Mammary epithelial cell (primary cell): ENCODE measurements at regions of chr15 and their contacts with region 1.

Region 1: GRCh38 chr15:75801859-75802593 is 41.2 kb upstream of the UBE2Q2 start:
- DNase-seq: peak; percentile 54
- H3K4me3 ChIP-seq: peak overlapping the region; percentile 12 to 42 (median 19)
- H3K27ac ChIP-seq: no peak overlapping the region
- H3K4me1 ChIP-seq: peaks cover 6% of the 10 kb centered on the region
- H3K27me3 ChIP-seq: no peaks in the 10 kb centered on the region
- CTCF ChIP-seq: peak; percentile 35 to 85

Region 2: DNA sequence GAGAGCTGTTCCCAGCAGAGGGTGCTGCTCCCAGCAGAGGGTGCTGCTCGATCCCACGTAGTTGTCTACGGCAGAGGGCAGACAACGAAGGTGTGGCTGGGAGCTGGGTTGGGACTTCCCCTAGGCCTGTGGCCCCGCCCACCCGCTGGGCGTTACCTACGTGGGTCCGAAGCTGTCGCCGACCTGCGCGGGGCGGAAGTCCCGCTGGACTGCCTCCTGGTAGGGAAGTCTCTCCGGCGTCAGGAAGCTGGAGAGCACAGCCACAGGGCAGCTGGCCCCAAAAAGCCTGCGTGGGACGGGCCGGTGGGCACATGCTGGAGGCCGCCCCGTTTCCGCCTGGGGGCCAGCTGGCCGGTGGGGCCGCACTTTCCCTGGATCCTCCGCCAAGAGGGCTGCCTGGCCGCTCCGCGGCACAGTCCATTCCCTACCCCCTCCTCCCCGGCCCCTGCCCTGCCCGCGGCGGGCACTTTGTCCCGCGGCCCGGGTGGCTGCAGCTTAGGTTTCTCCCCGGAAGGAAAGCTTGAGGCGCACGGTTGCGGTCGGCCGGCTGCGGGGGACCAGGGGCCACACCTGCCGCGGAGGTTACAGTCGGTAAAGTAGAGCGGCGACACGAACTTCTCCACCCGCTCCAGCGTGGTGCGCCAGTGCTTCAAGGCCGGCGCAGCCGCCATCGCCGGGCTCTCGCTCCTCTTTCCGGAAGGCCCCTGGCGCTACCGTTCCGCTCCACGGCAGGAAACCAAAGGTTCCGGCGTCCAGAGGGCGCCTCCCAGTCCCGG is 433.9 kb before region 1 on chr15 and contains the start of gene MAN2C1:
- CTCF ChIA-PET with region 1: no interaction called
- dilution Hi-C with region 1: no loop called
- in situ Hi-C with region 1: no loop called
- intact Hi-C with region 1: loop called (anchors 5 kb)
- DNase-seq: peak; percentile 96
- H3K4me3 ChIP-seq: peak within 1 kb of the TSS; percentile 64 to 79 (median 76)
- H3K27ac ChIP-seq: peak within 1 kb of the TSS; percentile 83
- H3K4me1 ChIP-seq: peaks cover 42% of the 10 kb centered on the region
- H3K27me3 ChIP-seq: no peaks in the 10 kb centered on the region
- CTCF ChIP-seq: peak; percentile 70 to 85
- total RNA-seq, gene MAN2C1: 78.2 to 156 TPM

Region 3: GRCh38 chr15:75508840-75509532 is 293.0 kb before region 1 on chr15:
- CTCF ChIA-PET with region 1: no interaction called
- dilution Hi-C with region 1: no loop called
- in situ Hi-C with region 1: no loop called
- intact Hi-C with region 1: loop called (anchors 2 kb)
- DNase-seq: peak; percentile 13
- H3K4me3 ChIP-seq: no peak overlapping the region
- H3K27ac ChIP-seq: no peak overlapping the region
- H3K4me1 ChIP-seq: no peaks in the 10 kb centered on the region
- H3K27me3 ChIP-seq: no peaks in the 10 kb centered on the region
- CTCF ChIP-seq: peak; percentile 32 to 56

Region 4: DNA sequence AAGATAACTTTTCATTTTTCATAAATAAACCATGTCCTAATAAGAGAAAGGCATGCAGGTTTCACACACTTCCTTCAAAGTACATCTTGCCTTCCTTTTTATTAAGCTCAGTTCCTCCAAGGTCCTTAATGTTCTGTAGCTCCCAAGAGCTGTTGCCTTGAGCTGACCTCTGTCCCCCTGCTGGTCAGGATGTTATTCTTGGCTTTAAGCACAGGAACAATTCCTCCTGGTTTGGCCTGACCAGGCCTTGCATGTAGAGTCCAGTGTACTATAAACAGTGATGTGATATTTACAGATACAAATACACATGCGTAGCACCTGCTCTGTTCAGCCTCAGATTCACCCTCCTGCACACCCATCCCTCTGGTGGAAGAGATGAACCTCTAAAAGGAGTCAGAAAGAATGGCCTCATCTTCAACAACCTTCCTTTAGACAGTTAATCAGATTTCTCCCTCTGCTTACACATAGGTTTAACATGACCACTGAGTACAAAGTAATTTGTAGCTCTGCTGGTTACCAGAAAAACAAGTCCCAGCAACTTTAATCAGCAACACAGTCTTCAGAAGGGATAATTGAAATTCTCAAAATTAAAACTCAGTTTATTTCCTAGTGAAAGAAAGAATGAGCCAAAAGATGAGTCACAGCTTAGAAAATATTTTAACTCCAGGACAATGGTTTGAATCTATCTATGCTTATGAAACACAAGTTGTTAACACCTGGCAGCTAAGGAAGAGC is 269.4 kb before region 1 on chr15:
- CTCF ChIA-PET with region 1: no interaction called
- dilution Hi-C with region 1: loop called (anchors 10 kb)
- in situ Hi-C with region 1: no loop called
- intact Hi-C with region 1: no loop called
- DNase-seq: peak; percentile 51
- H3K4me3 ChIP-seq: no peak overlapping the region
- H3K27ac ChIP-seq: peak overlapping the region; percentile 0
- H3K4me1 ChIP-seq: peaks cover 27% of the 10 kb centered on the region
- H3K27me3 ChIP-seq: no peaks in the 10 kb centered on the region
- CTCF ChIP-seq: peak; percentile 34 to 47

Region 5: GRCh38 chr15:75578948-75579920 is 222.8 kb before region 1 on chr15 and contains the start of gene PTPN9:
- CTCF ChIA-PET with region 1: no interaction called
- dilution Hi-C with region 1: loop called (anchors 5 kb)
- in situ Hi-C with region 1: no loop called
- intact Hi-C with region 1: no loop called
- DNase-seq: peak; percentile 39
- H3K4me3 ChIP-seq: peak within 1 kb of the TSS; percentile 72 to 94 (median 76)
- H3K27ac ChIP-seq: peak within 1 kb of the TSS; percentile 78
- H3K4me1 ChIP-seq: peaks cover 4% of the 10 kb centered on the region
- H3K27me3 ChIP-seq: no peaks in the 10 kb centered on the region
- CTCF ChIP-seq: peak in 1 of 2 donors; percentile 54
- total RNA-seq, gene PTPN9: 26.7 to 38.0 TPM

Region 6: GRCh38 chr15:75723847-75724660 is 78.0 kb before region 1 on chr15:
- CTCF ChIA-PET with region 1: interaction called, 5 read pairs
- dilution Hi-C with region 1: no loop called
- in situ Hi-C with region 1: no loop called
- intact Hi-C with region 1: loop called (anchors 1 kb)
- DNase-seq: peak; percentile 90
- H3K4me3 ChIP-seq: no peak overlapping the region
- H3K27ac ChIP-seq: peak overlapping the region; percentile 87
- H3K4me1 ChIP-seq: peaks cover 21% of the 10 kb centered on the region
- H3K27me3 ChIP-seq: no peaks in the 10 kb centered on the region
- CTCF ChIP-seq: no peak